GM13977 (cell line): ENCODE measurements at regions of chr3 and their contacts with region 1.

Region 1: GRCh38 chr3:49171119-49171774 is at the start of gene KLHDC8B:
- DNase-seq: peak; percentile 93
- CTCF ChIP-seq: peak; percentile 96

Region 2: GRCh38 chr3:49428697-49429100 is 257.5 kb after region 1 on chr3:
- in situ Hi-C with region 1: loop called (anchors 25 kb)
- DNase-seq: no peak
- CTCF ChIP-seq: peak; percentile 19